ENCODE measurements at regions of chr2 and their contacts with region 1.

Region 1: GRCh38 chr2:199979832-199980628 is 24.6 kb downstream of the MAIP1 start:
- DNase-seq: peak; percentile 37 to 70 (median 42)
- ATAC-seq: peak; percentile 83
- H3K4me3 ChIP-seq: no peak overlapping the region
- H3K27ac ChIP-seq: no peak overlapping the region
- H3K4me1 ChIP-seq: no peaks in the 10 kb centered on the region
- H3K27me3 ChIP-seq: no peaks in the 10 kb centered on the region
- CTCF ChIP-seq: peak; percentile 69 to 78 (median 72)
- EP300 ChIP-seq: no peak
- POLR2A ChIP-seq: no peak
- RAD21 ChIP-seq: peak; percentile 77 to 81

Region 2: DNA sequence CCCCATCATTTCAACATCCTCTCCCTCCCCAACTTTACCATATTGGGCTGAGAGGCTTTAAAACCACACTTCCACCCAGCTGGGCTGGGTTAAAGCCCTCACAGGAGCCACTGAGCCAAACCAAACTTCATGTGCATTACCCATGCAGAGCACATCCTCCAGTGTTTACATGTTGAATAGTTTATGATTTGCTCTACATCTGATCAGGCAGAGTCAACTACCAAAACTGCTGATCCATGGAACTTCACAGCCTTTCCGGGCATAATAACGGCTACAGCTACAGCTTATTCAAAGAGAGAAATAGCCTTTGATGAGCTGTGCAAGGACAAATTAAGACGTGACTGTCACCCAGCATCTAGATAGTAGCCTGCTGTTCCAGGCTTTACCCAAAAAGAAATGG is 14.3 kb after region 1 on chr2:
- CTCF ChIA-PET with region 1: no interaction called
- POLR2A ChIA-PET with region 1: no interaction called
- in situ Hi-C with region 1: no loop called
- intact Hi-C with region 1: no loop called
- DNase-seq: no peak
- ATAC-seq: no peak
- H3K4me3 ChIP-seq: no peak overlapping the region
- H3K27ac ChIP-seq: no peak overlapping the region
- H3K4me1 ChIP-seq: no peaks in the 10 kb centered on the region
- H3K27me3 ChIP-seq: no peaks in the 10 kb centered on the region
- CTCF ChIP-seq: no peak
- EP300 ChIP-seq: no peak
- POLR2A ChIP-seq: no peak
- RAD21 ChIP-seq: no peak

Region 3: DNA sequence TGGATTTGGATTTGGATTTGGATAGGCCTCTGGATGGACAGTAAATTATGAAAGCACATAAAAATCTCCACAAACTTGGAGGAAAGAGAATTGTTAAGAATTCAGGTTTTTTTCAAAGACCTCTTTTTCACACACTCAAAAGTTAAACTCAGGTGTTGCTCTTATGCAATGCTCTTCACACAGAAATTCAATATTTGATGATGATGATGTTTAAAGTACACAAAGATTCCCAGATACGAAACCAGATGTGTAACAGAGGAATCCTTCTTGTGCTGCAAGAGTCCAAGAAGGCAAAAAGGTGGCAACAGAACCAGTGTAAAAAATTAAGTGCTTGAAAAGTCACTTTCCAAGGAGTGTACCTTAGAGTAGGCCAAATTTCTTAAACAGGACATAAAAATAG is 250.7 kb after region 1 on chr2:
- CTCF ChIA-PET with region 1: no interaction called
- POLR2A ChIA-PET with region 1: no interaction called
- in situ Hi-C with region 1: no loop called
- intact Hi-C with region 1: no loop called
- DNase-seq: no peak
- ATAC-seq: no peak
- H3K4me3 ChIP-seq: no peak overlapping the region
- H3K27ac ChIP-seq: no peak overlapping the region
- H3K4me1 ChIP-seq: no peaks in the 10 kb centered on the region
- H3K27me3 ChIP-seq: no peaks in the 10 kb centered on the region
- CTCF ChIP-seq: no peak
- EP300 ChIP-seq: no peak
- POLR2A ChIP-seq: no peak
- RAD21 ChIP-seq: no peak

Region 4: DNA sequence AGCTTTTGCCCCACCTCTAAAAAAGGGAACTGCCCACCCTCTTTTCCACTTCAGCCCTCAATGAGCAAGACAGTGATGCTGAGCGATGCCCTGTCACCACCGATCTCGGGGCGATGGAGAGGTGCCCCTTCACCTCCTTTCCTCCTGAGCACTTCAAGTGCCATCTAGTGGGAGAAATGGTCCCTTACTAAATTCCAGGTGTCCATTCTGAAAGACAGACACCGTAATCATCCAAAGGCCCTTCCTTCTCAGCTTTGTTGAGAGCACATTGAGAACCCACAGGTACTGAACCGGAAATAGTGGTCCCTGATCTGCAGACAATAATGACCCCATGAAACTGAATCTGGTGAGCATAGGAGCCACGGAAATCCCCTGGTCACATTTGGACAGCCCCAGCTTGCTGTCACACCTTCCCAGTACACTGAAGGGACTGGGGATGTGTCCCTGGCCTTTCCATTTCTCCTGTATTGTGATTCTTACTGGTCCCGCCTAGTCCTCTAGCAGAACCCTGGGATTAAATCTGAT is 491.4 kb after region 1 on chr2:
- CTCF ChIA-PET with region 1: interaction called, 18 read pairs
- POLR2A ChIA-PET with region 1: interaction called, 3 read pairs
- in situ Hi-C with region 1: no loop called
- intact Hi-C with region 1: loop called (anchors 2 kb)
- DNase-seq: peak in 2 of 4 experiments; percentile 39
- ATAC-seq: peak; percentile 74
- H3K4me3 ChIP-seq: no peak overlapping the region
- H3K27ac ChIP-seq: no peak overlapping the region
- H3K4me1 ChIP-seq: no peaks in the 10 kb centered on the region
- H3K27me3 ChIP-seq: no peaks in the 10 kb centered on the region
- CTCF ChIP-seq: peak; percentile 35 to 66 (median 60)
- EP300 ChIP-seq: no peak
- POLR2A ChIP-seq: no peak
- RAD21 ChIP-seq: peak; percentile 68 to 75

Region 5: GRCh38 chr2:200483729-200484198 is 503.7 kb after region 1 on chr2:
- CTCF ChIA-PET with region 1: interaction called, 3 read pairs
- POLR2A ChIA-PET with region 1: no interaction called
- in situ Hi-C with region 1: no loop called
- intact Hi-C with region 1: loop called (anchors 1 kb)
- DNase-seq: peak; percentile 15 to 63 (median 28)
- ATAC-seq: peak; percentile 94
- H3K4me3 ChIP-seq: no peak overlapping the region
- H3K27ac ChIP-seq: no peak overlapping the region
- H3K4me1 ChIP-seq: peaks cover 6 to 9% of the 10 kb centered on the region in 2 experiments; a peak in 4 of 5 replicates
- H3K27me3 ChIP-seq: no peaks in the 10 kb centered on the region
- CTCF ChIP-seq: peak; percentile 65 to 76 (median 71)
- EP300 ChIP-seq: no peak
- POLR2A ChIP-seq: no peak
- RAD21 ChIP-seq: peak; percentile 27 to 70; a peak in 3 of 4 replicates

Region 6: GRCh38 chr2:200695191-200695590 is 715.2 kb after region 1 on chr2:
- CTCF ChIA-PET with region 1: no interaction called
- POLR2A ChIA-PET with region 1: no interaction called
- in situ Hi-C with region 1: loop called (anchors 10 kb)
- intact Hi-C with region 1: no loop called
- DNase-seq: no peak
- ATAC-seq: no peak
- H3K4me3 ChIP-seq: no peak overlapping the region
- H3K27ac ChIP-seq: no peak overlapping the region
- H3K4me1 ChIP-seq: no peaks in the 10 kb centered on the region
- H3K27me3 ChIP-seq: peaks cover 0 to 19% of the 10 kb centered on the region in 2 experiments; a peak in 3 of 5 replicates
- CTCF ChIP-seq: no peak
- EP300 ChIP-seq: no peak
- POLR2A ChIP-seq: no peak
- RAD21 ChIP-seq: no peak